SK-N-SH (cell line): ENCODE measurements at regions of chr1 and their contacts with region 1.

Region 1: DNA sequence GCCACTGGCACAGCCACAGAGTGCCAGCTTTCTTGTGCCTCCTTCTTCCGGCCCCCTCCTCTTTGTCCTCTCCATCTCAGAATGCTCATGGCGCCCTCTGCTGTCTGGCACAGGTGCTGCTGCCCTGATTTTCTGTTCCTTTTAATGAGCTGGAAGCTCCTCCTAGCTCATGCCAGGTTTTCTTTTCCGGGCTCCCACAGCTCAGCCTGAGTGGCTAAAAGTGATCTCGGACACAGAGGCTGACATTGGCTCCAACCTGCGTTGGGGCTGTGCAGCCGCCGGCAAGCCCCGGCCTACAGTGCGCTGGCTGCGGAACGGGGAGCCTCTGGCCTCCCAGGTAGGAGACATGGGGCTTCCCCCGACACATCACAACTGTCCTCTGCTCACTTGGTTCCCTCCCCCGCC is 18.7 kb downstream of the CNTN2 start:
- DNase-seq: peak; percentile 91
- H3K4me3 ChIP-seq: no peak overlapping the region; a peak in 1 of 4 replicates
- H3K27ac ChIP-seq: no peak overlapping the region
- H3K4me1 ChIP-seq: peaks cover 0 to 5% of the 10 kb centered on the region in 2 experiments; a peak in 1 of 4 replicates
- H3K27me3 ChIP-seq: no peaks in the 10 kb centered on the region
- CTCF ChIP-seq: peak; percentile 96
- EP300 ChIP-seq: no peak
- RAD21 ChIP-seq: peak; percentile 92

Region 2: DNA sequence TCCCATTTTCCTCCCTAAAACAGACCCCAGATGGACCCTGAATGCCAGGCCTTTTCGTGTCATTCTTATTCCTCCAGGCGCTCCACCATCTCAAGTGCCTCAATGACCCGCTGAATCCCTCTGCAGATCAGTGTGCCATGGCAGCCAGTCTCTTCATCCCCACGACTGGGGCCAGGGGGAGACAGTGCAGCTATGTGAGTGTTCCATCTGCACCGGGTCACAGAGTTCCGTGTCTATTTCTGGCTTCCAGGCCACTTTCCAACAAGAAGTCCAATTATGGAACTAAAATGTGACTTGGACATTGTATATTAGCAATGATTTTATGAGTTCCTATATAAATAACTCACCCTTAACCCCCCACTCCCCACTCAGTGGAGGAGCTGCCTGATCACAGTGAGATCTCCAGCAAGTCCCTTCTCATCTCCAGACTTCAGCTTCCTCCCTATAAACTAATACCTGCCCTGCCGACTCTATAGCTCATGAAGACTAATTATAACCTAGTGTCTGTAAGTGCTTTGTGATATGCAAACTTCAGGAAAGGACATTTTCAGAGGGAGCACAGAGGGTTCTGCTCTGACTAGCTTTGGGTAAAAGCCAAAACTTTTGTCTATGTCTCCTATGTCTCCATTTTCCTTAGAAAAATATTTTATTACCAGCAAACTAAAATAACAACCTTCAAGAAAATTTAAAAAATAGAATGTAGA is 247.3 kb before region 1 on chr1:
- CTCF ChIA-PET with region 1: interaction called, 15 read pairs
- POLR2A ChIA-PET with region 1: no interaction called
- DNase-seq: no peak
- H3K4me3 ChIP-seq: no peak overlapping the region
- H3K27ac ChIP-seq: no peak overlapping the region
- H3K4me1 ChIP-seq: peaks cover 0 to 4% of the 10 kb centered on the region in 2 experiments; a peak in 1 of 4 replicates
- H3K27me3 ChIP-seq: peaks cover 26% of the 10 kb centered on the region
- CTCF ChIP-seq: no peak
- EP300 ChIP-seq: no peak
- RAD21 ChIP-seq: no peak

Region 3: DNA sequence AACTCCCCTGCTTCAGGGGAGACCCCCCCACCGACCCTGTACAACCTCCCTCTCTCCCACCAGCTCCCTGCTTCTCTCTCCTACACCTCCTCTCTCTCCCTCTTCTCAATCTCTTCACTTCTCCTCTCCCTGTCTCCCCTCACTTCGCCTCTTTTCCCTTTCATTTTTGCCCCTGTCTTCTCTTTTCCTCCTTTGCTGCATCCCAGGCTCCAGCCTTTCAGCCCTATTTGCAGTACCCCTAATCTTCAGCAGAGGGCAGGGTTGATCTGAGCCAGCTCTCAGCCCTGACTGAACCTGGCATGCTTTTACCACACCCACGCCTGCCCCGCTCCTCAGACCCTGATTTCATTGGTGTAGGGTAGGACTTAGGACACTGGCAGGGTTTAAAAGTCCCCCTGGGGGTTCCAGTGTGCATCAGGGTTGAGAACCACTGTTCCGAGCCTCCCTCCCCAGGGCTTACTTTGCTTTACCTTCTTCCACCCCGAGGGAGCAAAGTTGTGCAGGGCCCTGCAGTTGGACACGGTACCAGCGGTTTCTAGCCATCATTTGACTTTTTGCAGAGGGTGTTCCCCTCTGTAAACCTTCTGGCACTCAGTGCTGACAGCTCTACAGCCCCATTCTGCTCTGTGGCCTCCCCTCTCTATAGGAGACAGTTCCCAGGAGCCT is 86.0 kb before region 1 on chr1:
- CTCF ChIA-PET with region 1: interaction called, 107 read pairs
- POLR2A ChIA-PET with region 1: interaction called, 3 read pairs
- DNase-seq: peak; percentile 88
- H3K4me3 ChIP-seq: no peak overlapping the region; a peak in 1 of 4 replicates
- H3K27ac ChIP-seq: no peak overlapping the region
- H3K4me1 ChIP-seq: peaks cover 0 to 11% of the 10 kb centered on the region in 2 experiments; a peak in 2 of 4 replicates
- H3K27me3 ChIP-seq: no peaks in the 10 kb centered on the region
- CTCF ChIP-seq: peak; percentile 77
- EP300 ChIP-seq: no peak
- RAD21 ChIP-seq: peak; percentile 79

Region 4: DNA sequence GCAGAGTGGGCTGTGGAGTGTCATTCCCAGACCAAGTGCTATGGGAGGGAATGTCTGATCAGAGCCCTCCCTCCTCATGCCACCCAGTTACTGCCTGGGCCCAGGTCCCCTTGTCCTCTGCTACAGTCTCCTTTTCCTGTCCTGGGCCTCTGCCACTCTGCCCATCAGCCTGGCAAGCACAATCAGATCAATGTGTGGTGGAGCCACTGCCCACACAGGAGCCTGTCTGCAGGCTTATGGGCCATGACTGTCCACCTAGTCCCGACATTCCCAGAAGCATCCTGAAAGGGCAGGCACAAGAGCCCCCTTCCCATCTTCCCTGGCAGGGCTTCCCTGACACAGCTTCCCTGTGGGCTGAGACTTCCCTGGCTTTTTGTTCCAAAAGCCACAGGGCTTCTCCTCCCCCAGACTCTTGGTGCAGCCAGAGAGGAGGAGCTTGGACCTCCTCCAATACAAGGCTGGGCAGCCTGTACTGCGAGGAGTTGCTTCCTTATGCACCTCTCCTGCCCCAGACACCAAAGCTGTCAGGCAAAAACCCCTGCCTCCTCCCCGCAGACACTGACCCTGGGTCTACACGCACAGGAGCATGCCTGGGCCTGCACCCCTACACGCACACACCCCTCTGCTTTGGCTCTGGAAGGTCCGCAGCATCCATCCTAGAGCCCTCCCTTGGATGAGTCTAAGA is 47.8 kb before region 1 on chr1:
- CTCF ChIA-PET with region 1: interaction called, 49 read pairs
- POLR2A ChIA-PET with region 1: no interaction called
- DNase-seq: peak; percentile 71
- H3K4me3 ChIP-seq: no peak overlapping the region
- H3K27ac ChIP-seq: peak overlapping the region in 1 of 2 experiments; percentile 47; a peak in 1 of 4 replicates
- H3K4me1 ChIP-seq: peaks cover 0 to 17% of the 10 kb centered on the region in 2 experiments; a peak in 3 of 4 replicates
- H3K27me3 ChIP-seq: no peaks in the 10 kb centered on the region
- CTCF ChIP-seq: no peak
- EP300 ChIP-seq: no peak
- RAD21 ChIP-seq: no peak

Region 5: GRCh38 chr1:205048382-205048781 is 13.3 kb before region 1 on chr1:
- CTCF ChIA-PET with region 1: interaction called, 92 read pairs
- POLR2A ChIA-PET with region 1: no interaction called
- DNase-seq: no peak
- H3K4me3 ChIP-seq: no peak overlapping the region
- H3K27ac ChIP-seq: no peak overlapping the region
- H3K4me1 ChIP-seq: peaks cover 0 to under 1% of the 10 kb centered on the region in 2 experiments; a peak in 1 of 4 replicates
- H3K27me3 ChIP-seq: peaks cover 47% of the 10 kb centered on the region
- CTCF ChIP-seq: no peak
- EP300 ChIP-seq: no peak
- RAD21 ChIP-seq: no peak

Region 6: GRCh38 chr1:205091043-205091740 is 29.5 kb after region 1 on chr1:
- CTCF ChIA-PET with region 1: interaction called, 74 read pairs
- POLR2A ChIA-PET with region 1: no interaction called
- DNase-seq: peak; percentile 49
- H3K4me3 ChIP-seq: no peak overlapping the region
- H3K27ac ChIP-seq: 0 out of 4 replicates have a peak overlapping the region, but pooled peaks of 1 of the 2 experiments have one; percentile 6
- H3K4me1 ChIP-seq: peaks cover 0 to 4% of the 10 kb centered on the region in 2 experiments; a peak in 1 of 4 replicates
- H3K27me3 ChIP-seq: no peaks in the 10 kb centered on the region
- CTCF ChIP-seq: no peak
- EP300 ChIP-seq: no peak
- RAD21 ChIP-seq: no peak

Region 7: DNA sequence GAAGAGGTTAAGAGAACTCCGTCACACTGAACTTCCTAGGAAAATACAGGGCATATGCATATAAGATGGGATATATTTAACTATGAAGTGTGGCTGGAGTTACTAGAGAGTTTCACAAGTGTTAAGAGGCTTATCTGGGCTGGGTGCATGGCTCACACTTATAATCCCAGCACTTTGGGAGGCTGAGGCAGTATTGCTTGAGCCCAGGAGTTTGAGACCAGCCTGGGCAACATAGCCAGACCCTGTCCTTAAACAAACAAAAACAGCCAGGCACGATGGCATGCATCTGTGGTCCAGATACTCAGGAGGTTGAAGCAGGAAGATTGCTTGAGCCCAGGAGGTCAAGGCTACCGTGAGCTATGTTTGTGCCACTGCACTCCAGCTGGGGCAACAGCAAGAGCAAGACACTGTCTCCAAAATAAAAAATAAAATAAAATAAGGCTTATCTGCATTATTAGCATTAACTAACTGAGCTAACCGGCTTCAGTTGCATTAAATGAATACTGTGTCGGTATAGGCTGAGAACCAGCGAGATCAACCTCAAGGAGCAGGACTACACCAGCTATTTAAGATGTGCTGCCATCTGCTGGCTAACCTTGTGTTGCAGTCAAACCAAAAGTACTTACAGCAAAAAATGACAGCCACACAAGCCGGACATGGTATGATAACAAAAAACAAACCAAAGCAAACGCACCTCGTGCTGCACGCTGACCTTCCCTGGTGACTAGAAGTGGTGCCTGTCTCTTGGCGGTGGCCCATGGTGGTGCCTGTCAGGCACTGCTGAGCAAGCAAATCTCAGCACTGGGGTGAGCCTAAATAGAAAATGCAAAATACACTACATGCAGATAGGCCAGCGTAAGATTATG is 79.8 kb after region 1 on chr1:
- CTCF ChIA-PET with region 1: interaction called, 14 read pairs
- POLR2A ChIA-PET with region 1: no interaction called
- DNase-seq: peak; percentile 67
- H3K4me3 ChIP-seq: peak overlapping the region in 1 of 2 experiments; percentile 33; a peak in 1 of 4 replicates
- H3K27ac ChIP-seq: no peak overlapping the region
- H3K4me1 ChIP-seq: peaks cover 5 to 10% of the 10 kb centered on the region in 2 experiments
- H3K27me3 ChIP-seq: no peaks in the 10 kb centered on the region
- CTCF ChIP-seq: peak; percentile 94
- EP300 ChIP-seq: no peak
- RAD21 ChIP-seq: peak; percentile 67